Activated CD4-positive, alpha-beta T cell treated with anti-CD3 and anti-CD28 coated beads for 36 hours (primary cell): ENCODE measurements at regions of chr21 and their contacts with region 1.

Region 1: DNA sequence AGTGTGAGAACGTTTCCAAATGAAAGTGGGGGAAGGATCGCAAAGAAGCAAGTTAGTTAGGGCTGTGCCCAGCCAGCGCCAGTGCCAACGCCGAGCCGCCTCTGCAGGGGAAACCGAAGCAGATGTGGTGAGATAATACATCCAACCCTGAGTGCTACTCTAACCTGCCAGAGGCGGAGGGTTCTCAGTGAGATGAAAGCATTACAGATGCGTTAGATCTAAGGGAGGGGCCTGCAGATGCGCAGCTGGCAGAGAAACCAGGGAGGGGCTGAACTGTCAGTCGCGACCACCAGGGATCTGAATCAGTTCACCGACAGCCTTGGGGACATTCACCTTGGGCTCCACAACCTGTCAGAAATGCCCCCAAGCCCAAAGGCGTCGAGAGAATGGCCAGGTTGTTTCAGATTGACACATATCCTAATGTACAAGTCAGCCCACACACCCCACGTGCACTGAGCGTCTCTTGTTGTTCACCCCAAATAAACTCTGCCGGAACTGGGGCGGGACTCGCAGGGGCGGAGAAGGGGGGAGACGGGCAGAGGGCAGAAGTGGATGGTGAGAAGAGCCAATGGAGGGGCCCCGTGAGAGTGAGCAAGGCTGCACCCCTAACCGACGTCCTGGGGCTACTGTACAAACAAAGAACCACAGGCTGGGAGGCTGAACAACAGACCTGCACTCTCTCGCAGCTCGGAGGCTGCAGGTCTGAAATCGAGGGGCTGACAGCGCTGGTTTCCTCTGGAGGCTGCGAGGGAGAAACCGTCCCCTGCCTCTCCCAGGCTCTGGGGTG is 8.7 kb upstream of the UMODL1 start:
- DNase-seq: peak; percentile 86
- ATAC-seq: peak; percentile 65
- H3K4me3 Mint-ChIP-seq: peak overlapping the region; percentile 60
- H3K27ac Mint-ChIP-seq: peak overlapping the region; percentile 86
- H3K4me1 Mint-ChIP-seq: peaks cover 43% of the 10 kb centered on the region
- H3K27me3 Mint-ChIP-seq: no peaks in the 10 kb centered on the region

Region 2: DNA sequence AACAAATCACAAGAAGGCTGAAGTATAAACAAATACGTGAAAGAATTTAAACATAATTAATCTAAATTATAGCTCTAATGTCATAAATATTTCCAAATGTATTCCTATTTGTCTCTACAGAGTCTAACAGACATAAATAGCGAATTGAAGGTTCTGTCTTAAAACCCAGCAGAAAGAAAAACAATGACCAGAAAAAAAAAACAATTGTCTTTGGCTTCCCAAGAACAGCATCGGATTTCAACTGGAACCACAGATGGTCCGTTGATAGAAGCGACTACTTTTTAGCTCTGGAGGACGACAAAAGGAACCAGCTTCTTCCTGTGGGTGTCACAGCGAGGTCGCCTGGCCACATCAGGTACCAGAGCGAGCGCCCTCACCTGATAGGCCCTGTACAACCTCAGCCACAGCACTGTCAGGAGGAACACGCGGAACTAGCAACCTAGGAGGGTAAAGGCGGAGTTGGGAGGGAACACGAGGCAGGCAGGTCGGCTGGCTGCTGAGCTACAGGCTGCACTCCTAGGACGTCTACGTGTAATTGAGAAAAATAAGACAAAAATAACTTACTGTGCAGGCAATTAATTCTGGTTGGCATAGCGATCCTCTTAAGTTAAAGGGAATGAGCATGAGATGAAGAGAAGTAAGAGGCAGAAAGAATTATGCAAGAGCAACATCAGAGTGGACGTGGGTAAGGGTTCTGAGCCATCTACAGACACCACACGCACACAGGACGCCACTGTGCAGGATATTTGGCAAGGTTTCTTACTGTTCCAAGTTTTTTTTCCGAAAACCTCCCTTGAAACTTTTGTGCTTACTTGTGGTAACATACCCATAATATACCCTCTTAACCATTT is 166.6 kb before region 1 on chr21:
- CTCF ChIA-PET with region 1: interaction called, 3 read pairs
- POLR2A ChIA-PET with region 1: no interaction called
- intact Hi-C with region 1: loop called in 1 of 2 experiments (anchors 2 kb)
- DNase-seq: peak; percentile 60
- ATAC-seq: peak; percentile 51
- H3K4me3 Mint-ChIP-seq: no peak overlapping the region
- H3K27ac Mint-ChIP-seq: no peak overlapping the region
- H3K4me1 Mint-ChIP-seq: peaks cover 28% of the 10 kb centered on the region
- H3K27me3 Mint-ChIP-seq: no peaks in the 10 kb centered on the region

Region 3: DNA sequence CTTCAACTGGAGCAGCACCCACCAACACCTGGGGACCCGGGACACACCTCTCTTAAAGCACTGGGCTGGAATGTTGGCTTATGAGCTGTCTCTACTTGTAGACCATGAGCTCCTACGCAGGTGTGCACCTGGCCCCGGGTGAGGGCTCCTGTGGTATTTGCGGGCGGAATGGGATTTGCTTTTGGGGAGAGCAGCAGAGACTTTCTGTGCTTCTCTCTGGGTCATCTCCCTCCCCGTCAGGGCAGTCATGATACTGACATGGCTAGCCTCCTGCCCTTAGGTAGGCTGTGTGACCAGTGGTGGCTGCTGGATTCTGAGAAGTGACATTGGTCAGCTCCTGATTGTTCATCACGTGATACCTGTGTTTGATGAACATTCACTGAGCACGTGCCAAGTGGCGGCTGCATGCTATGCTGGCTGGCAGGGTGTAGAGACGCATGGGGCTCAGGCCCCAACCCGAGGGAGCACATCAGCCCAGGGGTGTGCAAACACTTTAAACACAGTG is 43.3 kb before region 1 on chr21:
- CTCF ChIA-PET with region 1: no interaction called
- POLR2A ChIA-PET with region 1: no interaction called
- intact Hi-C with region 1: no loop called
- DNase-seq: no peak
- ATAC-seq: no peak
- H3K4me3 Mint-ChIP-seq: no peak overlapping the region
- H3K27ac Mint-ChIP-seq: no peak overlapping the region
- H3K4me1 Mint-ChIP-seq: no peaks in the 10 kb centered on the region
- H3K27me3 Mint-ChIP-seq: no peaks in the 10 kb centered on the region

Region 4: GRCh38 chr21:42174173-42174572 is 111.7 kb after region 1 on chr21:
- CTCF ChIA-PET with region 1: no interaction called
- POLR2A ChIA-PET with region 1: no interaction called
- intact Hi-C with region 1: no loop called
- DNase-seq: no peak
- ATAC-seq: peak; percentile 60
- H3K4me3 Mint-ChIP-seq: no peak overlapping the region
- H3K27ac Mint-ChIP-seq: no peak overlapping the region
- H3K4me1 Mint-ChIP-seq: peaks cover 3% of the 10 kb centered on the region
- H3K27me3 Mint-ChIP-seq: no peaks in the 10 kb centered on the region